CD8-positive, alpha-beta T cell (primary cell): ENCODE measurements at regions of chr17 and their contacts with region 1.

Region 1: GRCh38 chr17:32659419-32659842 is 172.6 kb downstream of the CDK5R1 start:
- DNase-seq: peak; percentile 41 to 73 (median 63)
- ATAC-seq: peak; percentile 65
- H3K4me3 ChIP-seq: no peak overlapping the region
- H3K4me3 Mint-ChIP-seq: no peak overlapping the region
- H3K27ac ChIP-seq: no peak overlapping the region
- H3K27ac Mint-ChIP-seq: no peak overlapping the region
- H3K4me1 ChIP-seq: no peaks in the 10 kb centered on the region
- H3K4me1 Mint-ChIP-seq: no peaks in the 10 kb centered on the region
- H3K27me3 ChIP-seq: no peaks in the 10 kb centered on the region
- H3K27me3 Mint-ChIP-seq: no peaks in the 10 kb centered on the region
- CTCF ChIP-seq: peak; percentile 91

Region 2: DNA sequence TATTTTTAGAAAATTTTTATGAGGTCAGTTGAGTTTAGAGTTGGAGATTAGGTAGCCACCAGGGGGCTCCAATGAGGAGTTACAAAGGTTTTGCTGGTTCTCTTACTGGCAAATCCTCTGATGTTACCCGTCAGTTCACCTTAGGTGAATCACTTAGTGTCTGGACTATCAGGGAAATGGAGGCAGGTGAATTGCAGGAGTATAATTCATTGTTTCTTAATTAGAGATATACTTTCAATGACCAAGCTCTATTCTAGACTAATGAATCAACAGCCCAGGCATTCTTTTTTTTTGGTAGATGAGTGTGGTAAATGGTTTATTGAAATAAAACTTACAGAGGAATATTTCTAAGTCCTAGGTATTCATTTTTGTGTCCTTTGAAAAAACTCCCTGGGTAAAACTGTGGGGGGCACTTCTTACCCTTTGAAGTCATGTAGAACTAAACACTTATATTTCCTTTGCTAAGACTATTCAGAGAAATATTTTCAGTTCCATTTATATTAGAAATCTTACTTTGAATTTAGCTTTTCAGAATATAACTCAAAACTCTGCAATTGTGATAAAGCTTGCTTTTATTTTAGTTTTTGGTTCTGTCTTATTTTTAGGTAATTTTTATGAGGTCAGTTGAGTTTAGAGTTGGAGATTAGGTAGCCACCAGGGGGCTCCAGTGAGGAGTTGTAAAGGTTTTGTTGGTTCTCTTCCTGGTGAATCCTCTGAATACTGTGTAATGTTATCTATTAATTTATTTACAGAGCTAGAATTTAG is 197.4 kb before region 1 on chr17:
- CTCF ChIA-PET with region 1: interaction called, 11 read pairs
- POLR2A ChIA-PET with region 1: no interaction called
- intact Hi-C with region 1: no loop called
- DNase-seq: peak; percentile 40 to 81 (median 67)
- ATAC-seq: peak; percentile 91
- H3K4me3 ChIP-seq: no peak overlapping the region
- H3K4me3 Mint-ChIP-seq: no peak overlapping the region
- H3K27ac ChIP-seq: no peak overlapping the region
- H3K27ac Mint-ChIP-seq: peak overlapping the region; percentile 38
- H3K4me1 ChIP-seq: peaks cover 4% of the 10 kb centered on the region
- H3K4me1 Mint-ChIP-seq: peaks cover 23% of the 10 kb centered on the region
- H3K27me3 ChIP-seq: no peaks in the 10 kb centered on the region
- H3K27me3 Mint-ChIP-seq: no peaks in the 10 kb centered on the region
- CTCF ChIP-seq: peak; percentile 56

Region 3: GRCh38 chr17:32648450-32648849 is 11.0 kb before region 1 on chr17:
- CTCF ChIA-PET with region 1: interaction called, 17 read pairs
- POLR2A ChIA-PET with region 1: no interaction called
- intact Hi-C with region 1: no loop called
- DNase-seq: no peak
- ATAC-seq: no peak
- H3K4me3 ChIP-seq: no peak overlapping the region
- H3K4me3 Mint-ChIP-seq: no peak overlapping the region
- H3K27ac ChIP-seq: no peak overlapping the region
- H3K27ac Mint-ChIP-seq: no peak overlapping the region
- H3K4me1 ChIP-seq: no peaks in the 10 kb centered on the region
- H3K4me1 Mint-ChIP-seq: no peaks in the 10 kb centered on the region
- H3K27me3 ChIP-seq: no peaks in the 10 kb centered on the region
- H3K27me3 Mint-ChIP-seq: no peaks in the 10 kb centered on the region
- CTCF ChIP-seq: no peak

Region 4: GRCh38 chr17:32671896-32672295 is 12.5 kb after region 1 on chr17:
- CTCF ChIA-PET with region 1: interaction called, 24 read pairs
- POLR2A ChIA-PET with region 1: no interaction called
- intact Hi-C with region 1: no loop called
- DNase-seq: no peak
- ATAC-seq: no peak
- H3K4me3 ChIP-seq: no peak overlapping the region
- H3K4me3 Mint-ChIP-seq: no peak overlapping the region
- H3K27ac ChIP-seq: no peak overlapping the region
- H3K27ac Mint-ChIP-seq: no peak overlapping the region
- H3K4me1 ChIP-seq: no peaks in the 10 kb centered on the region
- H3K4me1 Mint-ChIP-seq: no peaks in the 10 kb centered on the region
- H3K27me3 ChIP-seq: no peaks in the 10 kb centered on the region
- H3K27me3 Mint-ChIP-seq: no peaks in the 10 kb centered on the region
- CTCF ChIP-seq: no peak

Region 5: DNA sequence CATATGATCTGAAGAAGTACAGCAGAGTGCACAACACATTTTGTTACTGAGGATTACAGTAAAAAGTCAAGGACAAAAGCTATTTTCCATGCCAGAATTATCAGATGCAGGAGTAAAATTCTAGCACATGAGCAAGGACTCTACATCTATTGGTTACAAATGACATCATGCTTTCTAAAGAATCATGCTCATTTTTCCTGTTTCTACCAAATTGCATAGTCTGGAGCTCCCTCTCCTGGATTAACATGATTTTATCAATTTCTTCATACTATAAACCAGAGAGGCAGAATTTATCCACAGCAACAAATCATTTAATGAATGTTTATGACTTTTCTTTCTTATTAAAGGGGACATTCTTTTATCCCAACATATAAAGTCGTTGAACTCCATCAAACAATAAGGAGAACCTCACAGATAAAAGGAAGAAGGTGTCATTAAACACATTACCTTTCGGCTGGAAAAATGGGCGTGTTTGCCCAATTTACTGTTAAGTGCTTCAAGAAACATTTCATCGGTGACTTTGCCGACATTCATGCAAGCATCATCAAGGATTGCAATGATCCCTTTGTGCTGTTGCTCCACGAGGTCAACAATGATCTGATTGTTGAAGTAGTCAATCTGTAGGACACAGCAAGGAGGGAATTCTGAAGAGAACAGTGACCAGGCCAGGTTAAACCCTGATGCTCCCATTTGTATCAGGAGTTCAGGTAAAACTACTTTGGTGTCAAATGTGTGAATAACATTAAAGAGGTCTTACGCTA is 95.8 kb after region 1 on chr17:
- CTCF ChIA-PET with region 1: interaction called, 11 read pairs
- POLR2A ChIA-PET with region 1: no interaction called
- intact Hi-C with region 1: loop called in 1 of 2 experiments (anchors 1 kb)
- DNase-seq: peak in 2 of 9 experiments; percentile 60 to 71
- ATAC-seq: peak; percentile 87
- H3K4me3 ChIP-seq: no peak overlapping the region
- H3K4me3 Mint-ChIP-seq: no peak overlapping the region
- H3K27ac ChIP-seq: no peak overlapping the region
- H3K27ac Mint-ChIP-seq: no peak overlapping the region
- H3K4me1 ChIP-seq: peaks cover 8% of the 10 kb centered on the region
- H3K4me1 Mint-ChIP-seq: peaks cover 10% of the 10 kb centered on the region
- H3K27me3 ChIP-seq: no peaks in the 10 kb centered on the region
- H3K27me3 Mint-ChIP-seq: no peaks in the 10 kb centered on the region
- CTCF ChIP-seq: peak; percentile 54

Region 6: GRCh38 chr17:32936894-32937500 is 277.6 kb after region 1 on chr17:
- CTCF ChIA-PET with region 1: no interaction called
- POLR2A ChIA-PET with region 1: no interaction called
- intact Hi-C with region 1: loop called in 1 of 2 experiments (anchors 5 kb)
- DNase-seq: peak; percentile 16 to 74 (median 66)
- ATAC-seq: peak; percentile 55
- H3K4me3 ChIP-seq: no peak overlapping the region
- H3K4me3 Mint-ChIP-seq: peak overlapping the region; percentile 26
- H3K27ac ChIP-seq: no peak overlapping the region
- H3K27ac Mint-ChIP-seq: no peak overlapping the region
- H3K4me1 ChIP-seq: peaks cover 6% of the 10 kb centered on the region
- H3K4me1 Mint-ChIP-seq: peaks cover 3% of the 10 kb centered on the region
- H3K27me3 ChIP-seq: no peaks in the 10 kb centered on the region
- H3K27me3 Mint-ChIP-seq: peaks cover 31% of the 10 kb centered on the region
- CTCF ChIP-seq: peak; percentile 66